ENCODE measurements at regions of chr1 and their contacts with region 1.

Region 1: GRCh38 chr1:53945433-53946251 is at the start of gene IFT25:
- DNase-seq: peak; percentile 94 to 100 (median 98)

Region 2: DNA sequence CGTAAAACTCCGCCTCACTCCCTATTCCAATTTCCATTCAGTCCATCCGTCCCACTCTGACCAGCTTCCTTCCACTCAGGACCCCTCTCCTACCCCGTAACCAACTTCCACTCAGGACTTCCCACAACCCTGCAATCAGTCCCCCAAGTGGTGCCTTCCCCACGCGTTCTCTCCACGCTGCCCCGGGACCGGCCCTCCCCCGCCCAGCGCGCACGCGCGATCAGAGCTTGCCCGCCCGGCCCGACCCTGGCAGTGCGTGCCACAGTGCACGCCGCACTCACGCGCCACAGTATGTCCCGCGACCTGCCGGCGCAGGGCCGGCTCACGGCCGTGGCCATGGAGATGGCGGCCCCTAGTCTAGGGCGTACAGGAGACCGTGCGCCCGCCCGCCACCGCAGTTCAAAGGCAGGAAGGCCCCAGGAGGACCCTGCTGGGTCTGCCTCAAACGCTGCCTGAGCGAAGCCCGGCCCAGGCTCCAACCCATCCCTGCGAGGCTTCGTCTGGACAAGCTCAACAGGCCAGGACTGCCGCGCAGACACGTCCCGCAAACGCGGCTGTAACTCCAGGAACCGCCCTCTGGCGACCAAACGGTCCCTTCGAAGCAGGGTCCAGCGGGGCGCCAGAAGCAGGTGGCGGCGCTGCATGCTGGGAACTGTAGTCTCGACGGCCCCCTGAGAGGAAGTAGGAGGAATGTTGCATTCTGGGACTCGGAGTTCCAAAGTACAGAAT is 107.6 kb before region 1 on chr1 and contains the start of gene NDC1:
- intact Hi-C with region 1: loop called (anchors 5 kb)
- DNase-seq: peak; percentile 85 to 98 (median 94)

Region 3: DNA sequence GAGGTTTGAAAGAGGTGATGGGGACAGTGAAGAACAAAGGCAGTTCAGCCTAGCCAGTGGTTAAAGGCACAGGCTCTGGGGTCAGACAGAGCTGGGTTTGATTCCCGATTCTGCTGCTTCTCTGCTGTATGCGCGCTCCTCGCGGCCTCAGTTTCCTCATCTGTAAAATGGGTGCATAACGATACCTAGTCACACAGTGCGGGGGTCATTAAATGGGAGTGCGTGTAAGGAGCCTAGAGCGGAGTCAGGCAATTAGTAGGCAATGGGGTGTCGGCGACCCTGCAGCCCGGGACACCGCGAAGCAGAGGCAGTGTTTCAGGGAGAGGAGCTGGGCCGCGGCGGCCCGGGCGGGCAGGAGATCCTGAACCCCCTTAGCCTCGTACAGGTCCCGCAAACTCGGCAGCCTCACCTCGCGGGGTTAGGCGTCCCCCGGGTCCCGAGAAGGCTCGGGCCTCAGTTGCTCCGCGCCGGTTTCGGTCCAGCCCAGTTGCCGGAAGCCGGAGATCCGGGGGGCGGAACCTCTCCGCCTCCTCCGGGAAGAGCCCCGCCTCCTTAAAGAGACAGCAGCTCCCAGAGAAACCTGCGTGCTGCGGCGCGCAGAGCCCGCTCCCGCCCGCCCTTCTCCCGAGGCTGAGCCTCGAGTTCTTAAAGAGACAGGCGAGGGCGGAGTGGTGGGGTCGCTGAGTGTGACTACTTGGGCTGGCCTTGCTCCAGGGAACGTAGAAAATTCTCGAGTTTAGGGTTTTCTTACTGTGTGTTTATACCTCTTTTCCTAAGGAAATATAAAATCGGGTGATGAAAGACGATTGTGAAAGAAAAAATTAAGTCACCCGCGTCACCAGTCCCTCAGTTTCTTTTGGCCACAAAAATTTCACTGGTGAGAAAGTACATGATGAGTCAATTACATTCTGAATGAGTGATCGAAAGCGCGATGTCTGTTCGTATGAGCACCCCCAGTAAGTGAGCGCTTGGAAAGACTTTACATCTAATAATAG is 56.0 kb before region 1 on chr1 and contains the start of gene YIPF1:
- intact Hi-C with region 1: loop called (anchors 5 kb)
- DNase-seq: peak; percentile 87 to 98 (median 94)

Region 4: DNA sequence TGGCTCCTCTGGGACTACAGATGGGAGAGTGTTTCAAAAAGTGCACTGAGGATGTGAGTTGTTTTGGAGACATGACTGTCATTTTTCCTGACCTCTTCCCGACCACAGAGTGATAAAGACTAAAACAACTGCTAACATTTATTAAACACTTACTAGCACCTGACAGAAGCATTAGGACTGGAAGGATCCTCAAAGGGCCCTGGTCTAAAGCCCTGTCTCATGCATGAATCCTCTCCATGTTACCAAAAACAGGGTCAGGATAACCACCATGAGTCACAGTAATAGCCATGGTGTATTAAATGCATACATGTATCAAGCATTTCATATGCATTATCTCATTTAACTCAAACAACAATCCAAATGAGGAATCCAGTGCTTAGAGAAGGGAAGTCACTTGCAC is 242.6 kb after region 1 on chr1:
- intact Hi-C with region 1: no loop called
- DNase-seq: no peak

Measured in head of caudate nucleus (tissue), 42 donors.